Ovary (tissue), 10 donors: ENCODE measurements at regions of chr6 and their contacts with region 1.

Region 1: GRCh38 chr6:33454009-33454946 is at the start of gene ZBTB9:
- DNase-seq: peak; percentile 95 to 97 (median 96)
- H3K4me3 ChIP-seq: peak within 1 kb of the TSS; percentile 78
- H3K27ac ChIP-seq: peak within 1 kb of the TSS in 1 of 2 donors; percentile 65
- H3K4me1 ChIP-seq: peaks cover 6% of the 10 kb centered on the region
- H3K27me3 ChIP-seq: no peaks in the 10 kb centered on the region
- CTCF ChIP-seq: no peak
- EP300 ChIP-seq: no peak
- POLR2A ChIP-seq: peak; percentile 76
- total RNA-seq, gene ZBTB9: 2.4 to 13.5 (median 8.8) TPM

Region 2: GRCh38 chr6:33566182-33567084 is 112.2 kb after region 1 on chr6:
- intact Hi-C with region 1: loop called in 1 of 4 experiments (anchors 10 kb)
- DNase-seq: no peak
- H3K4me3 ChIP-seq: no peak overlapping the region
- H3K27ac ChIP-seq: no peak overlapping the region
- H3K4me1 ChIP-seq: no peaks in the 10 kb centered on the region
- H3K27me3 ChIP-seq: no peaks in the 10 kb centered on the region
- CTCF ChIP-seq: no peak
- EP300 ChIP-seq: no peak
- POLR2A ChIP-seq: no peak